Ascending aorta (tissue), 2 donors: ENCODE measurements at regions of chr9 and their contacts with region 1.

Region 1: GRCh38 chr9:92242260-92243136 is 51.0 kb downstream of the IARS1 start:
- DNase-seq: no peak
- H3K4me3 ChIP-seq: no peak overlapping the region
- H3K27ac ChIP-seq: no peak overlapping the region
- H3K4me1 ChIP-seq: no peaks in the 10 kb centered on the region
- H3K27me3 ChIP-seq: no peaks in the 10 kb centered on the region
- CTCF ChIP-seq: no peak

Region 2: DNA sequence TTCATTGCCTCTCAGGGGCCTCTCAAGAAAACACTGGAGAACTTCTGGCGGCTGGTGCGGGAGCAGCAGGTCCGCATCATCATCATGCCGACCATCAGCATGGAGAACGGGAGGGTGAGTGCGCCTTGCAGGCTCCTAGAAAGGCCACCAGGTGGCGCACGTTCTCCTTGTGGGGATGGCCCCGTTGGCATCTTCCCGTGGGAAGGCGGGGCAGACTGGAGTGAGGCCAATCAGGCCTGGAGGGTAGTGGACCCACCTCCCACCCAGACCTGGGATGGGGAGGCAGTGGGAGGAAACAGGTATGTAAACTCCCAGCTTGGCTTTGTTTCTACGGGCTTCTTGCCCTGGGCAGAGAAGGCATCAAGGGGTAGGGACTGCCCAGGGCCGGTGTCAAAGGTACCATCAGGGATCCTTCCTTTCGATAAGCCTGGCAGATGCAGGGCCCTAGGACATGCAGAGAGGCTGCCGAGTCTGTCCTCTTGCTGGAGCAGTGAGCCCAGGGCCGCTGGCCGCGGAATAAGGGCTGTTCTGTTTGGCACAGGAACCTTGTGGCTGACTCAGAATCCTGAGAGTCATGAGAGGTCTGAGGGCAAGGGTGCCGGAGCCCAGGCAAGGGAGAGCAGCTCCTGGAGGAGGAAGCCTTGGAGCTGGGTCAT is 108.4 kb before region 1 on chr9:
- intact Hi-C with region 1: loop called (anchors 10 kb)
- DNase-seq: peak in 1 of 2 donors; percentile 90
- H3K4me3 ChIP-seq: peak overlapping the region; percentile 42 to 54
- H3K27ac ChIP-seq: peak overlapping the region; percentile 58 to 74
- H3K4me1 ChIP-seq: peaks cover 0 to 6% of the 10 kb centered on the region in 2 donors
- H3K27me3 ChIP-seq: no peaks in the 10 kb centered on the region
- CTCF ChIP-seq: peak; percentile 62 to 97 (median 94)